ENCODE measurements at regions of chr1 and their contacts with region 1.

Region 1: GRCh38 chr1:47262787-47263413 is 30.9 kb upstream of the TAL1 start:
- DNase-seq: no peak
- H3K4me3 ChIP-seq: no peak overlapping the region
- H3K27me3 ChIP-seq: no peaks in the 10 kb centered on the region
- CTCF ChIP-seq: peak; percentile 70

Region 2: DNA sequence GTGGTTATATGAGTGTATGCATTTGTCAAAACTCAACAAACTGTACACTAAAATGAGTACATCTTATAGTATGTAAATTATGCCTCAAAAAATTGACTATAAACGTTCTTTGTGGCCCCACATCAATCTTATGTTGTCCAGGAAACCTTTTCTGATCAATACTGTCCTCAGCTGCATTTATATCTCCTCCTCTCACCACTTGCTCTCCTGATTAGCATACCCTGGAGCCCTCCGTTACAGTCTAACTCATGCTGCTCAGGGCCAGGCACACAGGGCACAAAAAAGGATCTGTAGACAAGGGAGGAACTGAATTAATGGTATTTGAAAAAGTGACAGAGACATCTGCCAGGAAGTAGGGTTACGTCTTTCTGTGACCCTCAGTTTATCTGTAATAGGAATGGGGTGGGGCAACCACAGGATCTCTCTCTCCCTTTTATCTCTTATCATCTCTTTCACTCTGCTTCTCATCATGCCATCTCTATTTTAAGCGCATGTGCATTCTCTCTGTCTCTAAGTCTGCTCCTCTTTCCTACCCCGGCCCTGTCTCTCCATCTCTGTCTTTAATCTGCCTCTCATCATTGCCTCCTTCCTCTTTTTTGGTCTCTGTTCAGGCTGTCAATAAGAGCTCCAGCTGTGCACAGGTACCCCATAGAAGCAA is 23.8 kb before region 1 on chr1:
- CTCF ChIA-PET with region 1: interaction called, 13 read pairs
- POLR2A ChIA-PET with region 1: no interaction called
- DNase-seq: no peak
- H3K4me3 ChIP-seq: no peak overlapping the region
- H3K27me3 ChIP-seq: peaks cover 20% of the 10 kb centered on the region
- CTCF ChIP-seq: no peak

Region 3: GRCh38 chr1:47280157-47280556 is 17.3 kb after region 1 on chr1:
- CTCF ChIA-PET with region 1: interaction called, 23 read pairs
- POLR2A ChIA-PET with region 1: no interaction called
- DNase-seq: peak; percentile 6
- H3K4me3 ChIP-seq: no peak overlapping the region
- H3K27me3 ChIP-seq: no peaks in the 10 kb centered on the region
- CTCF ChIP-seq: no peak

Region 4: GRCh38 chr1:47871799-47872353 is 609.0 kb after region 1 on chr1:
- CTCF ChIA-PET with region 1: no interaction called
- POLR2A ChIA-PET with region 1: no interaction called
- DNase-seq: no peak
- H3K4me3 ChIP-seq: no peak overlapping the region
- H3K27me3 ChIP-seq: no peaks in the 10 kb centered on the region
- CTCF ChIP-seq: no peak